ENCODE measurements at regions of chr11 and their contacts with region 1.

Region 1: GRCh38 chr11:61477727-61478148 is 30.8 kb upstream of the LRRC10B start:
- DNase-seq: peak; percentile 37 to 60 (median 46)
- ATAC-seq: no peak
- H3K4me3 ChIP-seq: no peak overlapping the region
- H3K27ac ChIP-seq: no peak overlapping the region
- H3K4me1 ChIP-seq: no peaks in the 10 kb centered on the region
- H3K27me3 ChIP-seq: peaks cover 0 to 4% of the 10 kb centered on the region in 2 donors
- CTCF ChIP-seq: peak; percentile 77 to 95 (median 86)
- POLR2A ChIP-seq: no peak

Region 2: DNA sequence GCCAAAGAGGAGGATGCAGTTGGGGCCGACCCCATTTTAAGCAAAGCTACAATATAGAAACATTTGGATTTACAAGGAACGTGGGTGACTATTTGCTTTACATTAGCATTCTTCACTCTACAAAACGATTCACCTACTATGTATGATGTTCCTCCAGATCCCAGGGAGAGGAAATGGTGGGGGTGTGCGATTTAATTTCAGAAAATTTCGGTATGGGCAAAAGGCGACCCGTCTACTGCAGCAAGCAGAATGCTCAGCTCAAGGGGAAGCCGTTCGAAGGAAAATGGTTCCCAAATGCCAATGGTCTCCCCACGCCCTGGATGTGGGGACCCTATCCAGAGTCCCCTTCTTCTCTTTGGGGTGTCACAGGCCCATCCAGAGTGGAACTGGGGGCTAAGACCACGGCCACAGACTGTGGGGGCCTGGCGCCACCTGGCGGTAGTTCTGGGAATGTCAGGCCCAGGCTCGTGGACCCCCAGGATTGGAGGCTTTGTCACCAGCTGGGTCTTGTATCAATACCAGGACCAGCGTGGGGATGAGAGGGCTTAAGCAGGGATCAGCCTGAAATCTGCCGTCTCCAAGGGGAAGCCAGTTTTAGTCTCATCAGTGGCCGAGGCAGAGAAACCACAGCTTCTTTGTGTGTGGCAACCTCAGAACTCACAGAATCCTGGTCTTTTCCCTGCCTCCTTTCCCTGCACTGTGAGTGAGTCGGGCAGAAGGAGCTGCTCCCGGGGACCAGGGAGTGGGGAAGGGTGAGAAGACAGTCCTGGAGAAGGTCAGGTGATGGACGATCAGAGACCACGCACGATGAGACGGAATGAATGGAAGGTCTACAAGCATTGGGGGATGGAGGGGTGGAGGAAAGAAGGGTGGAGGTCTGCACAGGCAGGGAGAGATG is 39.2 kb after region 1 on chr11:
- intact Hi-C with region 1: loop called (anchors 5 kb)
- DNase-seq: peak in 1 of 4 donors; percentile 48
- ATAC-seq: peak; percentile 45
- H3K4me3 ChIP-seq: no peak overlapping the region
- H3K27ac ChIP-seq: no peak overlapping the region
- H3K4me1 ChIP-seq: peaks cover 5% of the 10 kb centered on the region
- H3K27me3 ChIP-seq: peaks cover 0 to 12% of the 10 kb centered on the region in 2 donors
- CTCF ChIP-seq: peak; percentile 76 to 97 (median 88)
- POLR2A ChIP-seq: no peak

Region 3: GRCh38 chr11:61639816-61640443 is 162.2 kb after region 1 on chr11:
- intact Hi-C with region 1: loop called (anchors 5 kb)
- DNase-seq: no peak
- ATAC-seq: no peak
- H3K4me3 ChIP-seq: no peak overlapping the region
- H3K27ac ChIP-seq: no peak overlapping the region
- H3K4me1 ChIP-seq: peaks cover 6% of the 10 kb centered on the region
- H3K27me3 ChIP-seq: no peaks in the 10 kb centered on the region
- CTCF ChIP-seq: no peak
- POLR2A ChIP-seq: no peak

Measured in body of pancreas (tissue), 4 donors.